ENCODE measurements at regions of chr22 and their contacts with region 1.

Region 1: GRCh38 chr22:17095538-17095937 is 10.7 kb downstream of the IL17RA start:
- DNase-seq: no peak
- ATAC-seq: no peak
- H3K4me3 ChIP-seq: no peak overlapping the region
- H3K27ac ChIP-seq: peak overlapping the region in 1 of 12 donors; percentile 13
- H3K4me1 ChIP-seq: peaks cover 0 to 82% (median 0%) of the 10 kb centered on the region in 12 donors
- H3K27me3 ChIP-seq: no peaks in the 10 kb centered on the region
- CTCF ChIP-seq: peak in 5 of 12 donors; percentile 7 to 29 (median 11)
- POLR2A ChIP-seq: no peak

Region 2: GRCh38 chr22:17149076-17149810 is 53.7 kb after region 1 on chr22:
- intact Hi-C with region 1: loop called in 1 of 10 experiments (anchors 10 kb)
- DNase-seq: no peak
- ATAC-seq: peak in 1 of 4 donors; percentile 26
- H3K4me3 ChIP-seq: no peak overlapping the region
- H3K27ac ChIP-seq: no peak overlapping the region
- H3K4me1 ChIP-seq: peaks cover 0 to 19% (median 6%) of the 10 kb centered on the region in 12 donors
- H3K27me3 ChIP-seq: no peaks in the 10 kb centered on the region
- CTCF ChIP-seq: no peak
- POLR2A ChIP-seq: no peak

Region 3: DNA sequence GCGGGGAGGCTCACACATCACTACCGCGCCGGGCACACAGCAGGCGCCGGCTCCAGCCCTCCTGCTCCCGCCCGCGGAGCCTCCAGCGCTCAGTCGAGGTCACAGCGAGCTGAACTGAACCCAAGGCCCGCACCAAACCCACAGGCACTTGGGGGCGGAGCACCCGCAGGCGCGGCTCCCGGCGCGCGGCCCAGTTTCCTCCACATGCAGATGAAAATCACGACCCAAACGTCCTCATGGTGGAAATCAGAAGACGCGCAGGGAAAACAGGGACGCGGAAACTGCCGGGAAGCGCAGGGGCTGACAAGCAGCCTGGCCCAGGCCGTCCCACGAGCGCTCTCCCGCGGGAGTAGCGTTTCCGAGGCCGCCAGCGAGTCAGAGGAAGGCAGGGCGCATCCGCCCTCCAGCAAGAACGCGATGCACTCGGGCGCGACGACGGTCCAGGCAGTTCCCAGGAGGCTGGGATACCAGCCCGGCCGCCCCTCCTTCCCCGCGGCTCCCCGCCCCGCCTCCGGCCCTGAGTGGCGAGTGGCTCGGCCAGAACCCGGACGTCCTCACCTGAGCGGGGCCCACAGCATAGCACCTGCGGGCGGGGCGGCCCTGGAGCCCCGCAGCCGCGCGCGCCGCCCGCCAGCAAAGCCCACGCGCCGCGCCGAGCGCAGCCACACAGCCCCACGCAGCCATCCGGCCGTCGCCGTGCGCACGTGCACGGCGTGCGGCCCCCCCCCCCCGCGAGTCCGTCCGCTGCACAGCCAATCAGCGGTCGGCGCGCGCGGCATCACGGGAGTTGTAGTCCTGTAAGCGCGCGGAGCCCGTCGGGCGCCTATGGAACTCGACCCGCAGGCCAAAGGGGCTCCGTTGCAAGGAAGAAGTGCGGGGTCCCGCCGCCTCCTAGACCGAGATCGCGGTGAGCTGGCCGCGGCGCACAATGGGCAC is 63.3 kb after region 1 on chr22 and contains the start of gene HDHD5:
- intact Hi-C with region 1: loop called in 1 of 10 experiments (anchors 5 kb)
- DNase-seq: peak; percentile 92 to 96 (median 93)
- ATAC-seq: peak; percentile 84 to 95 (median 93)
- H3K4me3 ChIP-seq: peak within 1 kb of the TSS; percentile 69 to 94 (median 80)
- H3K27ac ChIP-seq: peak within 1 kb of the TSS; percentile 82 to 97 (median 92)
- H3K4me1 ChIP-seq: peaks cover 0 to 40% (median 25%) of the 10 kb centered on the region in 12 donors
- H3K27me3 ChIP-seq: no peaks in the 10 kb centered on the region
- CTCF ChIP-seq: peak in 2 of 12 donors; percentile 6 to 18
- POLR2A ChIP-seq: peak in 1 of 2 donors; percentile 49
- total RNA-seq, gene HDHD5: 35.7 to 60.3 (median 49.0) TPM